Activated CD4-positive, alpha-beta memory T cell treated with anti-CD3 and anti-CD28 coated beads, Interleukin-2, amount 10 ng/mL, durations not matched to agents 7 days and 5 days (primary cell): ENCODE measurements at regions of chr1 and their contacts with region 1.

Region 1: GRCh38 chr1:145858894-145859490 is at the start of gene PIAS3:
- DNase-seq: peak; percentile 90
- H3K4me3 Mint-ChIP-seq: peak within 1 kb of the TSS; percentile 97
- H3K27ac Mint-ChIP-seq: peak within 1 kb of the TSS; percentile 76
- H3K4me1 Mint-ChIP-seq: peaks cover 16% of the 10 kb centered on the region
- H3K27me3 Mint-ChIP-seq: peaks cover 12% of the 10 kb centered on the region
- total RNA-seq, gene PIAS3: 21.2 to 21.7 TPM

Region 2: DNA sequence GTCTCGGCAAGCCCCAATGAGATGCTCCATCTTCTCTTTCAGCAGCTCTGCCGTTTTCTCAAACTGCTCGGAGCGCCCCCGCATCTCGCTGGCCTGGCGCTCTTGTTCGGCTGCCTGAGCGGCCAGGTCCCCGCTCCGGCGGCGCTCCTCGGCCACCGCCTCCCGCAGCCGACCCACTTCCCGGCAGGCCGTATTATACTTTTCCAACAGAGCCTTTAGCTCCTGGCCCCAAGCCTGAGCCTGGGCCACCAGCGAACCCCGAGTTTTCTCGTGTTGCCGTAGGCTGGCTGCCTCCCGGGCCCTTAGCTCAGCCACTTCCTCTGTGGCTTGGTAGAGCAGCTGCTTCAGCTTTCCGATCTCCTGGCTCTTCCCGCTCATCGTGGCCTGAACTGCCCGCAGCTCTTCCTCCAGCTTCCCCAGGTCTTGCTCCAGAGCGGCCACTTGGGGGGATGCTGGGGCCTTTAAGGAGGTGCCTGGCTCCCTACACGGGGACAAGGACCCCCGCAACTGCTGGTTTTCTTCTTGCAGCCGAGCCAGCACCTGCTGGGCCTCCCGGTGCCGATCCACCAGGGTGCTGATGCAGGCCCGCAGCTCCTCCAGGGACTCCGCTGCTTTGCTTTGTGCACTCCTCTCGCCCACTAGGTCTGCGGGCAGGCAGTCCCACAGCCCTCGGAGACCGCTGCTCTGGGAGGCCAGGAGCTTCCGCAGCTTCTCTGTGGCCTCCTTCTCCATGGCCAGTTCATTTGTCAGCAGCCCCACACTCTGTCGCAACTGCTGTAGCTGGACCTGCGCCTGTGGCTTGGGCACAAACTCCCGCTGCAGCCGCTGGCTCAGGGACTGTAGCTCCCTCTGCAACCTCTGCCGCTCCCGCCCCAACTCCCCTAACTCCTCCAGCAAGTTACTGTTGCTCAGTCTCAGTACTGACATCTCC is 13.3 kb after region 1 on chr1:
- CTCF ChIA-PET with region 1: interaction called, 5 read pairs
- POLR2A ChIA-PET with region 1: interaction called, 21 read pairs
- DNase-seq: peak; percentile 54
- H3K4me3 Mint-ChIP-seq: peak overlapping the region; percentile 70
- H3K27ac Mint-ChIP-seq: peak overlapping the region; percentile 56
- H3K4me1 Mint-ChIP-seq: peaks cover 19% of the 10 kb centered on the region
- H3K27me3 Mint-ChIP-seq: peaks cover 48% of the 10 kb centered on the region

Region 3: GRCh38 chr1:145891587-145892485 is 32.8 kb after region 1 on chr1:
- CTCF ChIA-PET with region 1: interaction called, 11 read pairs
- POLR2A ChIA-PET with region 1: interaction called, 11 read pairs
- DNase-seq: peak; percentile 66
- H3K4me3 Mint-ChIP-seq: no peak overlapping the region
- H3K27ac Mint-ChIP-seq: no peak overlapping the region
- H3K4me1 Mint-ChIP-seq: peaks cover under 1% of the 10 kb centered on the region
- H3K27me3 Mint-ChIP-seq: peaks cover 2% of the 10 kb centered on the region

Region 4: DNA sequence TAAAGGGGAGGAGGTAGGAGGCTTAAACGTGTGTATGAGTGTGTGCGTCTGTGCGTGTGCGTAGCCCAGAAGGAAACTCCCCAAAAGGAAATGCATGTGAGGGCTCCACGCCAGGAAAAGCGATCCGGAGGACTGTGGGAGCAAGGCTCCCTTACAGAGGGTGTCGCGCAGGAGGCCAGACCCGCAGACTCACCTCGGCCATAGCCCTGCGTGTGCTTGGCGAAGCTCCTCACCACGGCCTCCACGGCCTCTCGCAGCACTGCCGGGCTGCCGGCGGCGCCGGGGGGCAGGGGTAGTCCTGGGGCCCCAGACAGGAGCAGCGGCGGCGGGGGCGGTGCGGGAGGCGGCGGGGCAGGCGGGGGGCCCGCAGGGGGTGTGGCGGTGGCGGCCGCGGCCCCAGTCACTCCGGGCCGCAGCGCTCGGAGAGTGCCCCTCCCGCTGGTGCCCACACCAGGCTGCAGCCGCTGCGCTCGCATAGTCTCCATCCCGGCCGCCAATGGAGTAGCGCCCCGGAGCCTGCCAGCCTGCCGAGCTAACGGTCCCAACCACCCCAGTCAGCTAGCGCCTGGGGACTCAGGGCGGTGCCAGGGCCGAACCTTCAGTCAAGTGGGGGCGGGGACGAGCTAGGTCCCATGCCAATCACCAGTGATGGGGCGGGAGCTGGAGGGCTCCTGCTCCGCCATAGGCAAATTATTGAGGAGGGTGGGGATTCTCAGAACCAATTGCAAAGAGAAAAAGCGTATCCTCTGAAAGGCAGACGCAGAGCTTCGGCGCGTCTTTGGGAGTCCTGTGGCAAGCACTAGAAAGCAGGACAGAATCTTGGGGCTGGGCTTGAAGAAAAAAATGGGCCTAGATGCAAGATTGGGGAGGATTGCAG is 98.7 kb after region 1 on chr1 and contains the start of gene LIX1L:
- CTCF ChIA-PET with region 1: no interaction called
- POLR2A ChIA-PET with region 1: interaction called, 18 read pairs
- DNase-seq: peak; percentile 96
- H3K4me3 Mint-ChIP-seq: peak within 1 kb of the TSS; percentile 86
- H3K27ac Mint-ChIP-seq: peak within 1 kb of the TSS; percentile 86
- H3K4me1 Mint-ChIP-seq: peaks cover 73% of the 10 kb centered on the region
- H3K27me3 Mint-ChIP-seq: peaks cover 5% of the 10 kb centered on the region
- total RNA-seq, gene LIX1L: 50.3 to 51.0 TPM

Region 5: DNA sequence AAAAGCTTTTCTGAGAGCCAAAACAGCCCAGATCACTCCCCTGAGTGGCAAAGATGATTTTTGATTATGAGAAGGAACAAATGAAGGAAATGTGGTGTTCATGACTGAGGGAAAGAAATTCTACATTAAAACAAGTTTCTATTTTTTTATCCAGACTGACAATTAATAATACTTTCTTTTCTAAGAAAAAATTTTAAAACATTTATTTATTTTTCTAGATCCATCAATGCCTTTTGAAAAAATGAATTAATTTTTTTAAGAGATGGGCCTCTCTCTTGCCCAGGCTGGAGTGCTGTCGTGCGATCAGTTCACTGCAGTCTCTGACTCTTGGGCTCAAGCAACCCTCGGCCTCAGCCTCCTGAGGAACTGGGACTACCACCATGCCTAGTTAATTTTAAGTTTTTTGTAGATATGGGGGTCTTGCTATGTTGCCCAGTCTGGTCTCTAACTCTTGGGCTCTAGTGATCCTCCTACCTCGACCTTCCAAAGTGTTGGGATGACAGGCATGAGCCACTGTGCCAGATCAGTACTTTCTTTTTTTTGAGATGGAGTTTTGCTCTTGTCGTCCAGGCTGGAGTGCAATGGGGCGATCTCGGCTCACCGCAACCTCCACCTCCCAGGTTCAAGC is 148.6 kb after region 1 on chr1:
- CTCF ChIA-PET with region 1: interaction called, 16 read pairs
- POLR2A ChIA-PET with region 1: interaction called, 3 read pairs
- DNase-seq: no peak
- H3K4me3 Mint-ChIP-seq: peak overlapping the region; percentile 55
- H3K27ac Mint-ChIP-seq: peak overlapping the region; percentile 87
- H3K4me1 Mint-ChIP-seq: peaks cover 36% of the 10 kb centered on the region
- H3K27me3 Mint-ChIP-seq: no peaks in the 10 kb centered on the region